AG04449 (cell line): ENCODE measurements at regions of chr16 and their contacts with region 1.

Region 1: GRCh38 chr16:1745181-1745899 is 26.0 kb downstream of the NME3 start:
- DNase-seq: peak; percentile 45
- H3K4me3 ChIP-seq: no peak overlapping the region
- CTCF ChIP-seq: no peak

Region 2: GRCh38 chr16:1621851-1622250 is 123.5 kb before region 1 on chr16:
- CTCF ChIA-PET with region 1: no interaction called
- POLR2A ChIA-PET with region 1: no interaction called
- DNase-seq: no peak
- H3K4me3 ChIP-seq: no peak overlapping the region
- CTCF ChIP-seq: no peak

Region 3: GRCh38 chr16:1668612-1669319 is 76.6 kb before region 1 on chr16:
- CTCF ChIA-PET with region 1: no interaction called
- POLR2A ChIA-PET with region 1: no interaction called
- DNase-seq: no peak
- H3K4me3 ChIP-seq: no peak overlapping the region
- CTCF ChIP-seq: no peak

Region 4: GRCh38 chr16:1723450-1724147 is 21.7 kb before region 1 on chr16:
- CTCF ChIA-PET with region 1: interaction called, 11 read pairs
- POLR2A ChIA-PET with region 1: no interaction called
- DNase-seq: no peak
- H3K4me3 ChIP-seq: no peak overlapping the region
- CTCF ChIP-seq: peak; percentile 53